Activated T-helper 1 cell treated with anti-CD3 and anti-CD28 coated beads, Interleukin-12 subunit alpha, Interleukin-12 subunit beta, Interleukin-2, Interleukin-4 antibody, amounts not matched to agents 30 ng/mL and 10 ng/mL and 1 ng/mL, durations not matched to agents 14 hours and 24 hours and 36 hours (primary cell): ENCODE measurements at regions of chr1 and their contacts with region 1.

Region 1: GRCh38 chr1:18902523-18903290 is at the start of gene ALDH4A1:
- DNase-seq: peak; percentile 93
- H3K4me3 Mint-ChIP-seq: peak within 1 kb of the TSS; percentile 96
- H3K27ac Mint-ChIP-seq: peak within 1 kb of the TSS; percentile 94
- H3K4me1 Mint-ChIP-seq: peaks cover 47% of the 10 kb centered on the region
- H3K27me3 Mint-ChIP-seq: no peaks in the 10 kb centered on the region
- total RNA-seq, gene ALDH4A1: 3.9 and 4.4 TPM in 2 replicates

Region 2: DNA sequence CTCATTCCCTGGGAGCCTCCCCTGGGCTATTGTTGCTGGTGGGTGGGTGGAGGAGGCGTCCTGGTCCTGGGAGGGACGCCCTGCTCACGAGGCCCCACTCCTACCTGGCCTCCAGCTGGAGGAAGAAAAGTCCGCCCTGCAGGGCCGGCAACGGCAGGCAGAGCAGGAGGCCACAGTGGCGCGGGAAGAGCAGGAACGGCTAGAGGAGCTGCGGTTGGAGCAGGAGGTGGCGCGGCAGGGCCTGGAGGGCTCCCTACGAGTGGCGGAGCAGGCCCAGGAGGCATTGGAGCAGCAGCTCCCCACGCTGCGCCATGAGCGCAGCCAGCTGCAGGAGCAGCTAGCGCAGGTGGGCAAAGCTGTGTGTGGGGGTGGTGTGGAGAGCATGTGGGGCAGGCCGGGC is 1956.1 kb before region 1 on chr1:
- intact Hi-C with region 1: no loop called
- DNase-seq: no peak
- H3K4me3 Mint-ChIP-seq: no peak overlapping the region
- H3K27ac Mint-ChIP-seq: no peak overlapping the region
- H3K4me1 Mint-ChIP-seq: no peaks in the 10 kb centered on the region
- H3K27me3 Mint-ChIP-seq: no peaks in the 10 kb centered on the region

Region 3: DNA sequence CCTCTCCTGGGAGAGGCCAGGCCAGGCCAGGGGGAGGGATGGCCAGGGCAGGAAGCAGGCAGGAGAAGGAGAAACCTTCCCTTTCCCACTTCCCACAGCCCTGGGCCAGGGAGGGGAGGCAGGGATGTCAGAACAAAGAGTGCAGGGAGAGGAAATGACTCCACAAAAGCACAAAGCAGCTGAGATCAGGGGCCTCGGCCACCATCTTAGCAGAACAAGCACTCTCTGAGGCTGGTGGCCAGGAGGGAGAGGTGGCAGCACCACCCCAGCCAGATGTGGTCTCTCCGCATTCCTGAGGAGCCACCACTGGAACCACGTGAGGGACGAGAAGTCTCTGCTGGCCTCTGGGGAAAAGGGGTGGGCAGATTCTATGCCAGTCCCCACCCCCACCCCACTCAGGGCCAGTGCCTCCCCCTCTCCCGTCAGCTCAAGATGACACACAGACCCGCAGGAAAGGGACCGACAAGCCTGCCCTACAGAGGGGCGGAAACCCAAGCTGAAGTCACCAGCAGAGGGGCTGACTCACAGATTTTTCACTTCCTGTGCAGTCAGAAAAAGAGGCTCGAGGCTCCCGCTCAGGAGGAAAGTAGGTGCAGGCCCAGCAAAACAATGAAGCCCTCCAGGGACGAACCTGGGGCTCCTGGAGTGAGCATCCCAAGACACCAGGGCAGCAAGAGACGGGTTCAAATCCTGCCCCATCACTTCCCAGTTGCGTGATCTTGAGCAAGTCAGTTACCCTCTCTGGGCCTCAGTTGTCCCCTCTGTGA is 23.8 kb after region 1 on chr1:
- intact Hi-C with region 1: loop called (anchors 1 kb)
- DNase-seq: peak; percentile 83
- H3K4me3 Mint-ChIP-seq: peak overlapping the region; percentile 82
- H3K27ac Mint-ChIP-seq: peak overlapping the region; percentile 98
- H3K4me1 Mint-ChIP-seq: peaks cover 70% of the 10 kb centered on the region
- H3K27me3 Mint-ChIP-seq: peaks cover 1% of the 10 kb centered on the region

Region 4: GRCh38 chr1:18956369-18957135 is 53.8 kb after region 1 on chr1 and contains the start of gene IFFO2:
- intact Hi-C with region 1: loop called (anchors 1 kb)
- DNase-seq: peak; percentile 97
- H3K4me3 Mint-ChIP-seq: peak within 1 kb of the TSS; percentile 89
- H3K27ac Mint-ChIP-seq: peak within 1 kb of the TSS; percentile 78
- H3K4me1 Mint-ChIP-seq: peaks cover 50% of the 10 kb centered on the region
- H3K27me3 Mint-ChIP-seq: peaks cover 26% of the 10 kb centered on the region
- total RNA-seq, gene IFFO2: 31.8 and 32.6 TPM in 2 replicates

Region 5: GRCh38 chr1:18989176-18989809 is 86.6 kb after region 1 on chr1:
- intact Hi-C with region 1: no loop called
- DNase-seq: no peak
- H3K4me3 Mint-ChIP-seq: no peak overlapping the region
- H3K27ac Mint-ChIP-seq: no peak overlapping the region
- H3K4me1 Mint-ChIP-seq: no peaks in the 10 kb centered on the region
- H3K27me3 Mint-ChIP-seq: peaks cover 14% of the 10 kb centered on the region

Region 6: DNA sequence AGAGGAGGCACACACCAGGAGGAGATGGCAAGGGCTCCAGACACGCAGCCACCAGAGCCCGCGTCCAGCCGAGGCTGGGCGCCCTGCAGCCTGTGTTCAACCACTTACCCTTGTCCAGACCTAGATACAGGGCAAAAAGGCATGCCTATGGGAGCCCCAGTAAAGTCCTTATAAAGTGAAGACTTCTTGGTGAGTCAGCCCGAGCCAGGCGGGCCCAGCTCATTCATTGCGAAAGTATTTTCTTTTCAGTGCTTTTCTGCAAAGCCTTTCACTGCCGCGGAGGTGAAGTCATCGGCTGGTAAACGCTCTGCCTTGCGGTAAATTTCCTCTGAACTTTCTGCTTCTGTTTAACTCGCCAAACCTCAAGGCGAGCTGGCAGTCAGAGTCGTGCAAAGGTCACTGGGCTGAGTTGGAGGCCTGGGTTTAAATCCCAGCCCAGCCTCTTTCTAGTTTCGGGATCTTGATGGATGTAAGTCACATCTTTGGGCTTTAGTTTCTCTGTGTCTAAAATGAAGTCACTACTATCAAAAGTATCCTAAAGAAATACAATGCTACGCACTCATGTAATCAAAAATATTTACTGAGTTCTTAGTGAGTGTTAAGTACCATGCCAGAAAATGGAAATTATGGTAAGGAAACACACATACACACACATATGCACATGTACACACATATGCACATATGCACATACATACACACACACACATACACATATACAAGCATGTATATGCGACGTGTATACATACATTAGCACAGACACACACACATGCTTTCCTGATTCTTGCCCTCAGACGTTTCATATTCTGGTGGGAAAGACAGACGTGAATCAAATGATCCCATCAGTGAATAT is 108.5 kb after region 1 on chr1:
- intact Hi-C with region 1: loop called (anchors 1 kb)
- DNase-seq: peak; percentile 75
- H3K4me3 Mint-ChIP-seq: peak overlapping the region; percentile 59
- H3K27ac Mint-ChIP-seq: peak overlapping the region; percentile 64
- H3K4me1 Mint-ChIP-seq: peaks cover 33% of the 10 kb centered on the region
- H3K27me3 Mint-ChIP-seq: peaks cover 15% of the 10 kb centered on the region

Region 7: GRCh38 chr1:19087737-19088594 is 185.3 kb after region 1 on chr1:
- intact Hi-C with region 1: loop called (anchors 2 kb)
- DNase-seq: peak; percentile 29
- H3K4me3 Mint-ChIP-seq: no peak overlapping the region
- H3K27ac Mint-ChIP-seq: peak overlapping the region; percentile 77
- H3K4me1 Mint-ChIP-seq: peaks cover 38% of the 10 kb centered on the region
- H3K27me3 Mint-ChIP-seq: no peaks in the 10 kb centered on the region

Region 8: GRCh38 chr1:19113697-19114092 is 211.0 kb after region 1 on chr1:
- intact Hi-C with region 1: loop called (anchors 1 kb)
- DNase-seq: peak; percentile 14
- H3K4me3 Mint-ChIP-seq: no peak overlapping the region
- H3K27ac Mint-ChIP-seq: no peak overlapping the region
- H3K4me1 Mint-ChIP-seq: no peaks in the 10 kb centered on the region
- H3K27me3 Mint-ChIP-seq: no peaks in the 10 kb centered on the region

Region 9: DNA sequence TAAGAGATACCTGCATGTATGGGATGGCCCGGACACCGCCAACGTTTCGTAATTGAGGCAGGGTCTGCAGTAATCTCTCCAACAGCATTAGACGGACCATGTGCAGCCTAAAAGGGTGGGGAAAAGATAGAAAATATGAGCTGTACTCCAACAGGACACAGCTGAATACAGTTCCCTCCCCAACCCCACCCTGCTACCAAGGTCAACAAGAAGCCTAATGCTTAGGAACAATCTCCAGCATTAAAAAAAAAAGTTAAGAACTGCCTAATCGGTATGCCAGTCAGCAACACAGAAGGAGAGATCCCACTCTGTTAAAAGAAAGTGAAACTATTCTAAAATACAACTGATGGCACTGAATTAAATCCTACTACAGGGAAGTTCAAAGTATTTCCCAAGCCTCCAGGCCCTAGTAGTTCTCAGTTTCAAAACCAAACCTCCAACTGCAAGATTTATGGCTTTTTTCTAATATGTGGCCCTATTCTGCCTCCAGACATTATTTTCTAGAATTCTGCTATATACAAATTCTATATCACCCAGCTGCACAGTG is 226.3 kb after region 1 on chr1:
- intact Hi-C with region 1: no loop called
- DNase-seq: no peak
- H3K4me3 Mint-ChIP-seq: no peak overlapping the region
- H3K27ac Mint-ChIP-seq: no peak overlapping the region
- H3K4me1 Mint-ChIP-seq: peaks cover 20% of the 10 kb centered on the region
- H3K27me3 Mint-ChIP-seq: no peaks in the 10 kb centered on the region